Esophagus muscularis mucosa (tissue), 4 donors: ENCODE measurements at regions of chr3 and their contacts with region 1.

Region 1: DNA sequence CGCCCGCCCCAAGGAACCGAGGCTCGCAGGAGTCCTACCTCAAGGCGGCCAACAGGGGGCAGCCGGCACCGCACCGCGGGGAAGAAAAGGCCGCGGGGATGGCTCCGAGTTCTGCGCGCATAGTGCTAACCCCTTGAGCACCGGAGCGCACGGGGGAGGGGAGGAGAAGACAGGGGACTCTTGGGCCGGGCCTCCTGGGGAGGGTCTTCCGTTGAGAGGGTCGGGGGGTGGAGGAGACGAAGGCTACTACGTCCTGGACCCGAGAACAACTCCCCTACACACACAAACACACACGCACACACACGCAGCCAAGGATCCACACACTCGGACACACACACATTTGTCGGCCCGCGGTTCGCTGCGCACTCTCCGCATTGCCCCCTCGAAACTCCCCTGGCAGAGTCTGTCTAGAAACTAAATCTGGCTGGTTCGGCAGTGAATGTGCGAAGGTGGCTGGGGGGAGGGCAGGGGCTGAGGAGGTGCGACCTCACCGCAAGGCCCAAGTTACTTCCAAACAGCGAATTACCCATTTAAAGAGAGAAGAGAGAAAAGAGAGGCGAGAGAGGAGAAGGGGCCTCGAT is 1.8 kb downstream of the WNT5A start:
- DNase-seq: no peak
- H3K4me3 ChIP-seq: peak overlapping the region; percentile 86 to 95 (median 90)
- H3K27ac ChIP-seq: peak overlapping the region; percentile 85 to 89 (median 86)
- H3K4me1 ChIP-seq: peaks cover 12 to 93% (median 88%) of the 10 kb centered on the region in 4 donors
- H3K27me3 ChIP-seq: peaks cover 0 to 61% (median 0%) of the 10 kb centered on the region in 4 donors
- CTCF ChIP-seq: peak in 2 of 3 experiments; percentile 39 to 96
- EP300 ChIP-seq: no peak
- POLR2A ChIP-seq: no peak

Region 2: GRCh38 chr3:54951405-54951804 is 533.9 kb before region 1 on chr3:
- intact Hi-C with region 1: loop called (anchors 10 kb)
- DNase-seq: no peak
- H3K4me3 ChIP-seq: no peak overlapping the region
- H3K27ac ChIP-seq: no peak overlapping the region
- H3K4me1 ChIP-seq: peaks cover 10 to 44% (median 40%) of the 10 kb centered on the region in 4 donors
- H3K27me3 ChIP-seq: no peaks in the 10 kb centered on the region
- CTCF ChIP-seq: peak; percentile 60 to 77 (median 67)
- EP300 ChIP-seq: no peak
- POLR2A ChIP-seq: no peak

Region 3: GRCh38 chr3:55746808-55747413 is 261.6 kb after region 1 on chr3:
- intact Hi-C with region 1: loop called (anchors 2 kb)
- DNase-seq: no peak
- H3K4me3 ChIP-seq: no peak overlapping the region
- H3K27ac ChIP-seq: no peak overlapping the region
- H3K4me1 ChIP-seq: no peaks in the 10 kb centered on the region
- H3K27me3 ChIP-seq: no peaks in the 10 kb centered on the region
- CTCF ChIP-seq: peak; percentile 45 to 54 (median 50)
- EP300 ChIP-seq: no peak
- POLR2A ChIP-seq: no peak

Region 4: GRCh38 chr3:56042326-56042951 is 557.1 kb after region 1 on chr3:
- intact Hi-C with region 1: loop called (anchors 10 kb)
- DNase-seq: no peak
- H3K4me3 ChIP-seq: no peak overlapping the region
- H3K27ac ChIP-seq: no peak overlapping the region
- H3K4me1 ChIP-seq: peaks cover 0 to 4% (median 0%) of the 10 kb centered on the region in 4 donors
- H3K27me3 ChIP-seq: peaks cover 0 to 5% (median 0%) of the 10 kb centered on the region in 4 donors
- CTCF ChIP-seq: peak; percentile 47 to 54 (median 50)
- EP300 ChIP-seq: no peak
- POLR2A ChIP-seq: no peak